ENCODE measurements at regions of chr19 and their contacts with region 1.

Region 1: GRCh38 chr19:13952154-13953035 is at the start of gene DCAF15:
- DNase-seq: peak; percentile 99
- H3K4me3 Mint-ChIP-seq: peak within 1 kb of the TSS; percentile 95
- H3K27ac Mint-ChIP-seq: peak within 1 kb of the TSS; percentile 85
- H3K4me1 Mint-ChIP-seq: peaks cover 17% of the 10 kb centered on the region
- H3K27me3 Mint-ChIP-seq: no peaks in the 10 kb centered on the region
- total RNA-seq, gene DCAF15: 67.0 to 72.0 TPM

Region 2: GRCh38 chr19:13905938-13906904 is 46.2 kb before region 1 on chr19 and contains the starts of genes BRME1 and CC2D1A:
- CTCF ChIA-PET with region 1: no interaction called
- POLR2A ChIA-PET with region 1: interaction called, 3 read pairs
- intact Hi-C with region 1: loop called (anchors 1 kb)
- DNase-seq: peak; percentile 97
- H3K4me3 Mint-ChIP-seq: peak within 1 kb of the TSS; percentile 83
- H3K27ac Mint-ChIP-seq: peak within 1 kb of the TSS; percentile 86
- H3K4me1 Mint-ChIP-seq: peaks cover 23% of the 10 kb centered on the region
- H3K27me3 Mint-ChIP-seq: no peaks in the 10 kb centered on the region
- total RNA-seq, gene BRME1: 7.7 to 9.0 TPM
- total RNA-seq, gene CC2D1A: 25.8 to 31.0 TPM

Region 3: GRCh38 chr19:13986348-13986904 is 34.0 kb after region 1 on chr19:
- CTCF ChIA-PET with region 1: no interaction called
- POLR2A ChIA-PET with region 1: interaction called, 5 read pairs
- intact Hi-C with region 1: loop called (anchors 1 kb)
- DNase-seq: peak; percentile 100
- H3K4me3 Mint-ChIP-seq: peak overlapping the region; percentile 62
- H3K27ac Mint-ChIP-seq: peak overlapping the region; percentile 97
- H3K4me1 Mint-ChIP-seq: peaks cover 58% of the 10 kb centered on the region
- H3K27me3 Mint-ChIP-seq: no peaks in the 10 kb centered on the region

Region 4: GRCh38 chr19:14006243-14006765 is 53.9 kb after region 1 on chr19 and contains the start of gene RFX1:
- CTCF ChIA-PET with region 1: no interaction called
- POLR2A ChIA-PET with region 1: interaction called, 4 read pairs
- intact Hi-C with region 1: loop called (anchors 1 kb)
- DNase-seq: peak; percentile 100
- H3K4me3 Mint-ChIP-seq: peak within 1 kb of the TSS; percentile 89
- H3K27ac Mint-ChIP-seq: peak within 1 kb of the TSS; percentile 97
- H3K4me1 Mint-ChIP-seq: peaks cover 38% of the 10 kb centered on the region
- H3K27me3 Mint-ChIP-seq: no peaks in the 10 kb centered on the region
- total RNA-seq, gene RFX1: 14.4 to 15.2 TPM

Region 5: DNA sequence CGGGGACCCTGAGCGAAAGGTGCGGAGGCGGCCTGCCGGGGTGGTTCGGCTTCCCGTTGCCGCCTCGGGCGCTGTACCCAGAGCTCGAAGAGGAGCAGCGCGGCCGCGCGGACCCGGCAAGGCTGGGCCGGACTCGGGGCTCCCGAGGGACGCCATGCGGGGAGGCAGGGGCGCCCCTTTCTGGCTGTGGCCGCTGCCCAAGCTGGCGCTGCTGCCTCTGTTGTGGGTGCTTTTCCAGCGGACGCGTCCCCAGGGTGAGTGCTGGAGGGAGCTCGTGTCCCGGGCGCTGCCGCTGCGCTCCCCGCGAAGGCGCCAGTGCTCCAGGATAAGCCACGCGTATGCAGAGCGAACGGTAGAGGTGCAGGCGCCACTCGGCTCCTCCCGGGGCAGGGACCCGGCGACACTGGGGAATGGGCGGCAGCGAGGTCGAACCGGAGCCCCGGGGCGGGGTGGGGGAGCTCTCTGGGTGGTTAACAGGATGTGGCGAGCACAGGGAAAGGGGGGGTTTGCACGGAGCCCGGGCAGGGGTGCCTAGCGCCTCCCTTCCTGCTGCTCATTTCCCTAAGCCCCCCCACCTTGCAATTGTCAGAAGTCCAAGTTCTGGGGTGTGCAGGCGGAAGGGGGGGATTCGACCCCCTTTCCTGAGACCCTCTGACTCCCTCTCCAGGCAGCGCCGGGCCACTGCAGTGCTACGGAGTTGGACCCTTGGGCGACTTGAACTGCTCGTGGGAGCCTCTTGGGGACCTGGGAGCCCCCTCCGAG is 79.5 kb after region 1 on chr19 and contains the start of gene IL27RA:
- CTCF ChIA-PET with region 1: interaction called, 12 read pairs
- POLR2A ChIA-PET with region 1: interaction called, 8 read pairs
- intact Hi-C with region 1: loop called (anchors 5 kb)
- DNase-seq: peak; percentile 86
- H3K4me3 Mint-ChIP-seq: peak within 1 kb of the TSS; percentile 93
- H3K27ac Mint-ChIP-seq: peak within 1 kb of the TSS; percentile 91
- H3K4me1 Mint-ChIP-seq: peaks cover 21% of the 10 kb centered on the region
- H3K27me3 Mint-ChIP-seq: no peaks in the 10 kb centered on the region
- total RNA-seq, gene IL27RA: 61.9 to 62.0 TPM

Region 6: DNA sequence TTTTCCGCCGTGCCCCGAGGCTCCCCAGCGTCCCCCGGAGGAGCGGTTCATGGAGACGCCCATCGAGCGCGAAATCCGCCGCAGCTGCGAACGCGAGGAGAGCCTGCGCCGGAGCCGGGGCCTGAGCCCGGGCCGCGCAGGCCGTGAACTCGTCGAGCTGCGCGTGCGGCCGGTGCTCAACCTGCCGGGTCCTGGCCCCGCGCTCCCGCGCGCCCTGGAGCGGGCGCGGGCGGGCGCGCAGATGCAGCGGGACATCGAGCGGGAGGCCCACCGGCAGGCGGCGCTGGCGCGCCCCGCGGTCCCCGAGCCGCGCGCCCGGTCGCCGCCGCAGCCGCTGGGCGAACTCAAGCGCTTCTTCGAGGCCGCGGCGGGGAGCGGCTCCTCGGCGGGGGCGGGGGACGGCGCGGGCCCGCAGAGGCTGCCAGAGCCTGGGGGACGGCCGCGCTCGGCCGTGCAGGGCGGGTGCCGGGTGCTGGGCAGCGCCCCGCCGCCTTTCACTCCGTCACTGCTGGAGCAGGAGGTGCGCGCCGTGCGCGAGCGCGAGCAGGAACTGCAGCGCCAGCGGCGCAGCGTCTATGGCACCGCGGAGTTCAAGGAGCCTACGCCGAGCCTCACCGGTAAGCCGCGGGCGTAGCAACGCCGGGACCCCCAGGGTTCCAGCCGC is 121.0 kb after region 1 on chr19:
- CTCF ChIA-PET with region 1: interaction called, 4 read pairs
- POLR2A ChIA-PET with region 1: no interaction called
- intact Hi-C with region 1: loop called (anchors 2 kb)
- DNase-seq: peak; percentile 80
- H3K4me3 Mint-ChIP-seq: peak overlapping the region; percentile 95
- H3K27ac Mint-ChIP-seq: peak overlapping the region; percentile 84
- H3K4me1 Mint-ChIP-seq: peaks cover 13% of the 10 kb centered on the region
- H3K27me3 Mint-ChIP-seq: no peaks in the 10 kb centered on the region

Region 7: GRCh38 chr19:14081325-14082093 is 129.1 kb after region 1 on chr19:
- CTCF ChIA-PET with region 1: no interaction called
- POLR2A ChIA-PET with region 1: no interaction called
- intact Hi-C with region 1: loop called (anchors 1 kb)
- DNase-seq: peak; percentile 99
- H3K4me3 Mint-ChIP-seq: peak overlapping the region; percentile 84
- H3K27ac Mint-ChIP-seq: peak overlapping the region; percentile 87
- H3K4me1 Mint-ChIP-seq: peaks cover 17% of the 10 kb centered on the region
- H3K27me3 Mint-ChIP-seq: peaks cover 2% of the 10 kb centered on the region

Measured in activated CD4-positive, alpha-beta memory T cell treated with anti-CD3 and anti-CD28 coated beads for 36 hours (primary cell).